ENCODE measurements at regions of chr16 and their contacts with region 1.

Region 1: DNA sequence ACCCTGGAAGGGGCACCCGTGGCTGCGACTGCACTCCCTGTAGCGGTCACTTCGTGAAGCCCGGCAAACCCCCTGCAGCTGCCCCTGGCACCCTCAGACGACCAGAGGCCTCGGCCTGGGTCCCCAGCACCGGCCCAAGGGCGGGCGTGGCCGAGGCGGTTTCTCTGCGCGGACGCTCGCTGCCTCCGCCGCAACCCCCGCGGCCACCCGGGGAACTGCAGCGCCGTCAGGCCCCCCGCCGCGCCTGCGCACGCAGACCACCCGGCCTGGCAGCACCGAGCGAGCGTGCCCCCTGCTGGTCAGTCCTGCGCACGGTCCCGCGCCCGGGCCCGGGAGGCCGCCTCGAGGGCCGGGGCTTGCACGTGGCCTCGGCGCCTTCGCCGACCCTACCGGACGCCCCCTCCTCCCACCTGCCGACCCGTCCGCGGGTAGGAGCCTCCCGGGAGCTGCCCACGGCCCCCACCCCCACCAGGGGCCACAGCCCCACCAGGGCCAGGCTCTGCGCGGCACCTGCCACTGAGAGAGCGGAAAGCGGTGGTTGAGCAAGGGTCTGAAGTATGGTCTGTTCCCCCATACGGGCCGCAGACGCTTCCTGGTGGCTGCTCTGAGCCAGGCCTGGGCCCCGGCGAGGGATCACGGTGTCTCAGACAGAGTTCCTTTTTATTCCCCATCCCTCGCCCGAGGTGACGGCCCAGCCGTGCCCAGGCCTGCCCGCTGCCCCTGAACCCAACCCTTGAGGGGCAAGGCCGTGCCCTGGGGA is 11.5 kb upstream of the HS3ST6 start:
- DNase-seq: peak; percentile 95
- ATAC-seq: peak; percentile 97

Region 2: GRCh38 chr16:1863681-1864460 is 65.9 kb before region 1 on chr16:
- intact Hi-C with region 1: loop called (anchors 5 kb)
- DNase-seq: no peak
- ATAC-seq: no peak

Region 3: DNA sequence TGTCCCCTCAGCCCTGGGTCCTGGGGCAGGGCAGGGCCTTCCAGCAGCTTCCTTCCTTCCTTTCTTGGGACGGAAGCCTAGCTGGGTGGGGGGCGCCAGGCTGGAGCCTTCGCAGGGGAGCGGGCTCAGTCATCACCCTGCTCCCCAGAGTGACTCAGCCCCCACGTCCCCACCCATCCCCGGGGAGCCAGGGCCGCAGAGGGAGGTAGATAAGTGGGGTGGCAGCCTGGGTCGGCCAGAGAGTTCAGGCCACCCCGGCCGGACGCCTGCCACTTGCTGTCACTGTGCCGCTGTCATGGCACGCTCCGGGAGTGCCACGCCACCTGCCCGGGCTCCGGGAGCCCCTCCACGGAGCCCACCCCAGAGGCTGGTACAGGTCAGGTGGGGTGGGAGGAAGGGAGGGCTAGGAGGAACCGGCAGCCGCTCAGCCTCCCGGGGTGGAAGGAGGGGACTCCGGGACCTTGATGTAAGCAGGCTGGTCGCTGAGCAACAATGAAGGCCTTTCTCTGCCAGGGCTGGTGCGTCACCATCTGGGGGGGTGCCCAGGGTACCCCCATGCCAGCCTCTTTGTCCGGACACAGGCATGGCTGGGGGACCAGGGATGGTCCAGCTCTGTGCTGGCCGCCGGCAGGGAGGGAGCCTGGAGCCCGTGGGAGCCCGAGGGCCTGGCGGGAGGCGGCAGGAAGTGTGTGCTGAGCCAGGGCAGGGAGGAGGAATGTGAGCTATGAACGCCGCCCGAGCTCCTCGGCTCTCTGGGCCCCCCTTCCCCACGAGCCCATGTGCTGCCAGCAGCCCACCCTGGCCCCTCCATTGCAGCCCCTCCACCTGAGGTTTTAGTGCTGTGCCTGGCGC is 103.5 kb after region 1 on chr16:
- intact Hi-C with region 1: no loop called
- DNase-seq: peak; percentile 79
- ATAC-seq: peak; percentile 62